CD4-positive, alpha-beta memory T cell (primary cell): ENCODE measurements at regions of chr16 and their contacts with region 1.

Region 1: GRCh38 chr16:17369421-17370222 is 101.1 kb downstream of the XYLT1 start:
- DNase-seq: peak; percentile 85 to 89 (median 88)
- H3K4me3 ChIP-seq: peak overlapping the region; percentile 26 to 65
- H3K4me3 Mint-ChIP-seq: peak overlapping the region; percentile 89 to 98 (median 92)
- H3K27ac ChIP-seq: peak overlapping the region; percentile 70
- H3K27ac Mint-ChIP-seq: peak overlapping the region; percentile 95 to 100 (median 99)
- H3K4me1 ChIP-seq: peaks cover 100% of the 10 kb centered on the region
- H3K4me1 Mint-ChIP-seq: peaks cover 76 to 97% (median 88%) of the 10 kb centered on the region in 4 donors
- H3K27me3 ChIP-seq: no peaks in the 10 kb centered on the region
- H3K27me3 Mint-ChIP-seq: no peaks in the 10 kb centered on the region

Region 2: DNA sequence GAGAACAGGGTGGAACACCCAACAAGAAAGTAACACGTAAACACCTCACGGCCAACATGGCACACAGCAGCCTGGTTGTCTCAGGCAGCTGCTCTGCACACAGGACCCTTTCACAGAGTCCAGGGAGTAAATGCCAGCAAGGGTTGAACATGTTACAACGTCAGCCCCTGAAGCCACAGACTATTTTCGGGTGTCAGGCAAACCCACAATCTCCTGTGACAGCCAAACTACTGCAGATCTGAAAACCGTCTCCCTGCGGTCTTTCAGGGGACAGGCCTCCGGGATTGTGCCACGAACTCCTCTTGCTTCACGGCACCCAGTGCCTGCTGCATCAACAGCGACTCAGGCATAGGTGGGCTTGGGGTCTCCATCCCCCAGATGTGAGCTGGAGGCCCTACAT is 26.6 kb before region 1 on chr16:
- CTCF ChIA-PET with region 1: interaction called, 5 read pairs
- POLR2A ChIA-PET with region 1: interaction called, 23 read pairs
- intact Hi-C with region 1: no loop called
- DNase-seq: peak; percentile 51 to 73 (median 60)
- H3K4me3 ChIP-seq: no peak overlapping the region
- H3K4me3 Mint-ChIP-seq: peak overlapping the region in 7 of 8 donors; percentile 30 to 84 (median 56)
- H3K27ac ChIP-seq: no peak overlapping the region
- H3K27ac Mint-ChIP-seq: peak overlapping the region; percentile 13 to 93 (median 91)
- H3K4me1 ChIP-seq: peaks cover 67% of the 10 kb centered on the region
- H3K4me1 Mint-ChIP-seq: peaks cover 54 to 84% (median 69%) of the 10 kb centered on the region in 4 donors
- H3K27me3 ChIP-seq: no peaks in the 10 kb centered on the region
- H3K27me3 Mint-ChIP-seq: no peaks in the 10 kb centered on the region

Region 3: DNA sequence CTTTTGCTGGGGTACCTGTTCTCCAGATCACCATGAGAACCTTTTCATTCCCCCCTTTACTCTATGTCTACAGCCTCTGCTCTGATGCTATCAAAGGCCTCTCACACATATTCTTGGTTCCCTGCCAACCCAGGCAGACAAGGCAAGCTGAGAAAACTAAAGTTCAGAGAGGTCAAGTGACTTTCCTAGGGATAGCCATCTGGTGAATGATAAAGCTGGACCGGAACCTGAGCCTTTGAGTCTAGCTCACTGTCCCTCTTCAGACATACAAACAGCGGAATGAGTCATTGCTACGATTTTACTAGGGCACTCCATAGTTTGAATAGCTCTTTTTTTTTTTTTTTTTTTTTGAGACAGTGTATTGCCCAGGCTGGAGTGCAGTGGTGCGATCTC is 27.9 kb after region 1 on chr16:
- CTCF ChIA-PET with region 1: interaction called, 10 read pairs
- POLR2A ChIA-PET with region 1: interaction called, 201 read pairs
- intact Hi-C with region 1: loop called (anchors 1 kb)
- DNase-seq: peak; percentile 37 to 68 (median 45)
- H3K4me3 ChIP-seq: no peak overlapping the region
- H3K4me3 Mint-ChIP-seq: peak overlapping the region; percentile 16 to 89 (median 76)
- H3K27ac ChIP-seq: peak overlapping the region; percentile 77
- H3K27ac Mint-ChIP-seq: peak overlapping the region; percentile 97 to 100 (median 99)
- H3K4me1 ChIP-seq: peaks cover 77% of the 10 kb centered on the region
- H3K4me1 Mint-ChIP-seq: peaks cover 45 to 85% (median 68%) of the 10 kb centered on the region in 4 donors
- H3K27me3 ChIP-seq: no peaks in the 10 kb centered on the region
- H3K27me3 Mint-ChIP-seq: no peaks in the 10 kb centered on the region

Region 4: GRCh38 chr16:17448640-17449638 is 79.3 kb after region 1 on chr16:
- CTCF ChIA-PET with region 1: interaction called, 5 read pairs
- POLR2A ChIA-PET with region 1: interaction called, 22 read pairs
- intact Hi-C with region 1: loop called (anchors 2 kb)
- DNase-seq: peak; percentile 48 to 70 (median 56)
- H3K4me3 ChIP-seq: peak overlapping the region in 1 of 2 donors; percentile 15
- H3K4me3 Mint-ChIP-seq: peak overlapping the region; percentile 24 to 78 (median 74)
- H3K27ac ChIP-seq: peak overlapping the region; percentile 44
- H3K27ac Mint-ChIP-seq: peak overlapping the region; percentile 89 to 96 (median 93)
- H3K4me1 ChIP-seq: peaks cover 69% of the 10 kb centered on the region
- H3K4me1 Mint-ChIP-seq: peaks cover 43 to 78% (median 56%) of the 10 kb centered on the region in 4 donors
- H3K27me3 ChIP-seq: no peaks in the 10 kb centered on the region
- H3K27me3 Mint-ChIP-seq: no peaks in the 10 kb centered on the region

Region 5: DNA sequence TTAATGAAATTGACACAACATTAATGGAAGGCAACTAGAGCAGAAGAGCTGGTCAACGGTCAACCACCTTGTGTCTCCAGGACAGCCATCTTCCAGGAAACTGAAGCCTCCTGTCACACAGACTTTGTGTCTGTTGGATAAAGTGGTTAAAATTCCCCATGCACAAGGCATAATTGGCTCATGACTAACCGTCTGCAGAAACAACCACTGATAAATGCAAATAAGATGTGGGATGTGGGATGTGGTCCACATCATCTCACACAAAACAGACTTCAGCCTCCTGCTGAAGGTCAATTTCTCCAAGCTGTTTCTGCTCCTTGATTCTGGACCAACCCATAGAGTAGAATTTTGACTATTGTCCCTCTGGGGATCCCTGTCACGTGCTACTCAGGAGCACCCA is 128.0 kb after region 1 on chr16:
- CTCF ChIA-PET with region 1: no interaction called
- POLR2A ChIA-PET with region 1: no interaction called
- intact Hi-C with region 1: no loop called
- DNase-seq: no peak
- H3K4me3 ChIP-seq: no peak overlapping the region
- H3K4me3 Mint-ChIP-seq: no peak overlapping the region
- H3K27ac ChIP-seq: no peak overlapping the region
- H3K27ac Mint-ChIP-seq: no peak overlapping the region
- H3K4me1 ChIP-seq: no peaks in the 10 kb centered on the region
- H3K4me1 Mint-ChIP-seq: no peaks in the 10 kb centered on the region
- H3K27me3 ChIP-seq: no peaks in the 10 kb centered on the region
- H3K27me3 Mint-ChIP-seq: peaks cover 0 to 4% of the 10 kb centered on the region in 2 donors